Endothelial cell of umbilical vein (primary cell): ENCODE measurements at regions of chr3 and their contacts with region 1.

Region 1: GRCh38 chr3:190003681-190004123 is 117.0 kb downstream of the P3H2 start:
- DNase-seq: peak; percentile 86
- H3K4me3 ChIP-seq: no peak overlapping the region
- H3K27ac ChIP-seq: peak overlapping the region; percentile 82
- H3K4me1 ChIP-seq: peaks cover 22% of the 10 kb centered on the region
- H3K27me3 ChIP-seq: no peaks in the 10 kb centered on the region
- CTCF ChIP-seq: no peak
- POLR2A ChIP-seq: peak; percentile 49

Region 2: GRCh38 chr3:189685854-189686253 is 317.8 kb before region 1 on chr3:
- CTCF ChIA-PET with region 1: no interaction called
- POLR2A ChIA-PET with region 1: no interaction called
- dilution Hi-C with region 1: no loop called
- intact Hi-C with region 1: loop called (anchors 5 kb)
- DNase-seq: peak; percentile 78
- H3K4me3 ChIP-seq: no peak overlapping the region
- H3K27ac ChIP-seq: peak overlapping the region; percentile 96
- H3K4me1 ChIP-seq: peaks cover 15% of the 10 kb centered on the region
- H3K27me3 ChIP-seq: no peaks in the 10 kb centered on the region
- CTCF ChIP-seq: no peak
- POLR2A ChIP-seq: no peak

Region 3: DNA sequence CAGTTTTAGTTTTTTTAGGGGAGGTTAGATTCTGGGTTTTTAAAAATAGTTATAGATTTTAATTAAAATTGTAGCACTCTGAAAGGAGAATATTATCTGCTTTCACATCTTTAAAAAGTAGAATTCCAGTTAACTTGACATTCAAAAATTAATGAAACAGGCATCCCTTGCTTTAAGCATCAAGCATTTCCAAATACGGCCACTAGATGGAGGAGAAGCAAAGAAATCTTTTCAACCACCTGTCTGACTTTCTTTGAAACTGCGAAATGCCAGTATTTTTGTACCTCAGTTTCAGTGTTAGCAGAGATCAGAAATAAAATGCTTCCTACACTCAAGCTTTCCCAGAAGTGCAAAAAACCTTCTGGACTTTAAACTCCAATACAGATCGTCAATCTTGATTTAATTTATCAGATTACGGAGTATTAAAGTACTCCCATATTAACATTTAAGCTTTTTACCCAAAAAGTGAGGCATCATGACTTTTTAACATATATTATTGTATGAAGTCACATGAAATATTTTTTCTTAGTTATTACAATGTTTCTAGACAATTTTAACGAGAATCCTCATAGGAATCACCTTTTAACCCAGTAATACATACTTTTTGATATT is 36.3 kb before region 1 on chr3:
- CTCF ChIA-PET with region 1: no interaction called
- POLR2A ChIA-PET with region 1: no interaction called
- dilution Hi-C with region 1: no loop called
- intact Hi-C with region 1: loop called (anchors 5 kb)
- DNase-seq: peak; percentile 71
- H3K4me3 ChIP-seq: no peak overlapping the region
- H3K27ac ChIP-seq: no peak overlapping the region
- H3K4me1 ChIP-seq: no peaks in the 10 kb centered on the region
- H3K27me3 ChIP-seq: no peaks in the 10 kb centered on the region
- CTCF ChIP-seq: peak; percentile 58 to 63
- POLR2A ChIP-seq: no peak

Region 4: DNA sequence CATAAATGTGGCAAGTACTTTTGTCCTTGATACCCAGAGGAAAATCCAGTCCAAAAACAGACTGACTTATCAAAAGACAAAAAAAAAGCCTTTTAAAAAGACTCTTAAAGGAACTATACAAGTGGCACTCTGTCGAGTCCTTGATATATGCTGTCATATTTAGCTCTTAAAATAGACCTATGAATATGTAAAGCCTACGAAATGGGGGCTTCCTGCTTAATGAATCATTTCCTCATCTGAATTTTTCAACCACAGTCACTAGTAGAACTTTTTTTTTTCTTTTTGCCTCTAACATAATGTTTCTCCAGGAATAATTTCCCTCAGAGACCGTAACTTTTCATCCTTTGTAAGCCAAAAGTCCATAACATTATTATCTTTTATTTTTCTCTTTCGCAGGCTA is 21.2 kb after region 1 on chr3:
- CTCF ChIA-PET with region 1: no interaction called
- POLR2A ChIA-PET with region 1: no interaction called
- dilution Hi-C with region 1: no loop called
- intact Hi-C with region 1: loop called (anchors 1 kb)
- DNase-seq: peak; percentile 76
- H3K4me3 ChIP-seq: peak overlapping the region in 1 of 3 experiments; percentile 11
- H3K27ac ChIP-seq: peak overlapping the region; percentile 90
- H3K4me1 ChIP-seq: peaks cover 12% of the 10 kb centered on the region
- H3K27me3 ChIP-seq: no peaks in the 10 kb centered on the region
- CTCF ChIP-seq: no peak
- POLR2A ChIP-seq: no peak

Region 5: GRCh38 chr3:190279690-190280089 is 276.0 kb after region 1 on chr3:
- CTCF ChIA-PET with region 1: no interaction called
- POLR2A ChIA-PET with region 1: no interaction called
- dilution Hi-C with region 1: no loop called
- intact Hi-C with region 1: no loop called
- DNase-seq: no peak
- H3K4me3 ChIP-seq: no peak overlapping the region
- H3K27ac ChIP-seq: no peak overlapping the region
- H3K4me1 ChIP-seq: no peaks in the 10 kb centered on the region
- H3K27me3 ChIP-seq: peaks cover 0 to 2% of the 10 kb centered on the region in 2 experiments
- CTCF ChIP-seq: no peak
- POLR2A ChIP-seq: no peak